Thyroid gland (tissue), 4 donors: ENCODE measurements at regions of chr16 and their contacts with region 1.

Region 1: DNA sequence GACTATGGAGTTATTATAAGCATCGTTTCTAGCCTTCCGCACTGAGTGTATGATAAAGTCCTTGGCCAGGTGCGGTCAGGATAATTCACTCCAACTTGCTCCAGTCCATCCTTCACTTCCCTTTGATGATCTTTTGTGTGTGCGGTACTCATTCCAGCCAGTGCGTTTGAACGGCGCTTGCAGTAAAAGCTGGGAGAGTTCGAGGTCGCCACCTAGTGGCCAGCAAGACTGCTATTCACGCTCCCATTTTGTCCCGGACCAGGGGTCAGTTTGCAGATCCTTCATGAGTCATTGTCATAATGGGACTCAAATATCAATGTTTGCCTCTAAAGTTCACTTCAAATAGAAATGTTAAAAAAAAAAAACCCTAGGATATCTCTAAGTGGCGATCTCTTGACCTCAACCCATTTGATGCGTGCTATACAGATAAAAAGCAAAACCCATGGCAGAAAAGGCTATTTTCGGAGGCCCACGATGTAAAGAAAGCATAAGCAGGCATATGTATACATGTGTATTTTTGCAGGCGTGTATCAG is 417.1 kb downstream of the TMEM114 start:
- DNase-seq: peak; percentile 76 to 83
- H3K4me3 ChIP-seq: no peak overlapping the region
- H3K27ac ChIP-seq: no peak overlapping the region
- H3K4me1 ChIP-seq: peaks cover 0 to under 1% of the 10 kb centered on the region in 2 donors
- H3K27me3 ChIP-seq: no peaks in the 10 kb centered on the region
- CTCF ChIP-seq: peak; percentile 59 to 98 (median 87)
- POLR2A ChIP-seq: no peak

Region 2: GRCh38 chr16:6682142-6682811 is 1490.9 kb before region 1 on chr16:
- intact Hi-C with region 1: loop called (anchors 10 kb)
- DNase-seq: peak; percentile 51 to 60
- H3K4me3 ChIP-seq: no peak overlapping the region
- H3K27ac ChIP-seq: no peak overlapping the region
- H3K4me1 ChIP-seq: no peaks in the 10 kb centered on the region
- H3K27me3 ChIP-seq: no peaks in the 10 kb centered on the region
- CTCF ChIP-seq: peak; percentile 48 to 82 (median 66)
- POLR2A ChIP-seq: no peak

Region 3: DNA sequence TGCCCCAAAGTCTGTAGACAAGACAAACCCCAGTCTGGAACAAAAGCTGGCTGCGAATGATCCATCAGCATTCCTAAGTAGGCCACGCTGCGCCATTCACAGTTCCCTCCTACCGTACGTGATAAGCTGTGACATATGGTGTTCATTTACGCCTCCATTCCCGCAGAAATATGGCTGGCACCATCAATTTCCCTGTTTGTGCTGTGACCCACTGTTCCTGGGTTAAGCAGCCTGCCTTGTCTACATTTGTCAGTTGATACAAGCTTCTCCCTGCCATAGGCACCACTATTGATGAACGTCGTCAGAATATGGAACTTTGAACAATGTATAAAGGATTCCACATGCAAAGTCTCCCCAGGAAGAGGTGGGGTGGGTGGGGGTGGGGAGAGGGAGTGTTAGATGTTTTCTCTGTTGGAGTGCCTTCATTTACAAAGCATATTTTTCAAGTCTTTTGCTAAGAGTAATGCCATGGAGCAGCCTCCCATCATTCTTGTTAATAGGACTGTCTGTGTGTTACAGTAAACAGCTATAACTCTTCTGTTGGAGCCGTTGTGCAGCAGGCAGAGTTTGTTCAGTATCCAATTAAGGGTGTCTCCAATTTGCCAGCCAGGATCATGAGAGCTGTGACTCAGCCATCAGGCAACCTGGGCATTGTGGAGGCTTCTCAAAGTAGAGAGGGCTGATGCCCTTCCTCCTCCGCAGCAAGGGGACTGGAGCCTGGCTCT is 122.5 kb after region 1 on chr16:
- intact Hi-C with region 1: no loop called
- DNase-seq: no peak
- H3K4me3 ChIP-seq: no peak overlapping the region
- H3K27ac ChIP-seq: no peak overlapping the region
- H3K4me1 ChIP-seq: no peaks in the 10 kb centered on the region
- H3K27me3 ChIP-seq: no peaks in the 10 kb centered on the region
- CTCF ChIP-seq: no peak
- POLR2A ChIP-seq: no peak